ENCODE measurements at regions of chr14 and their contacts with region 1.

Region 1: DNA sequence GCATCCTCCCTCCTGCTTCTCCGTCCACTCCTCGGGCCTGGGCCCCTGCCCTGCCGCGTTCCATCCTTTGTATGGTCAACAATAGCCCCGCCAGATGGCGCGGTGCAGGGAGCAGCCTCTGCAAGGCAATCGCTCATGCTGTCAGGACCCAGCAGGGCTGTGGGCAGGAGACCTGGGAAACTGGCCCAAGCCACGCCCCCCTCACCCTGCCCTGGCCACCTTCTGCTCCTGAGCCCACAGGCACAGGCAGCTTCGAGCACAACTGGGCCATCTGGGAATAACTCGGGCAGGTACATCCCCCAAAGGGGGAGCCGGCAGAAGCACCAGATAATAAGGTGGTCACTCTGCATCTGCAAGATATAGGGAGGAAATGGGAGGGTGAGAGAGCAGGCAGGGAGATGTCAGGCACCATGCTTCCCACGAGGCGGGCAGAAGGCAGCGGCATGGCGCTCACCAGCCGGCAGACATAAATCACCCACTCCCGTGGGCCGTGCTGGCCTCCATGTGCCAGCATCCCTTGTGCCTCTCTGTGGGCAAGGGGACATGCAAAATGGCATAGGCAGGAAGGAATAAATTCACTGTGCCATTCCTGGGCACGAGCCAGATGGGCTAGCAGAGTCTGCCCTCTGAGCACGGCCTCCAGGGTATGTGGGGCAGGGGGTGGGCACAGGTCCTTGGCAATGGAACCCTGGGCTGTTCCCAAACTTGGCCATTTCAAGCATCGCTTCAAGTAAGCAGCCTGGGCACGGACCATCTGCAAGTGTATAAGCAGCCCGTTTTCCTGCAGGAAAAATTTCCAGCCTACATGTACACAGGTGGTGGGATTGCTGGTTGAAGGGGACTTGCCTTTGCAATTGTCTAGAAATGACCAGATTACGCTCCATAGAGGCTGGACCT is 40.5 kb downstream of the CCDC85C start:
- DNase-seq: peak; percentile 69 to 81
- ATAC-seq: peak; percentile 88 to 93 (median 90)
- H3K4me3 ChIP-seq: no peak overlapping the region
- H3K27ac ChIP-seq: no peak overlapping the region
- H3K4me1 ChIP-seq: peaks cover 25% of the 10 kb centered on the region
- H3K27me3 ChIP-seq: no peaks in the 10 kb centered on the region
- CTCF ChIP-seq: peak; percentile 47

Region 2: DNA sequence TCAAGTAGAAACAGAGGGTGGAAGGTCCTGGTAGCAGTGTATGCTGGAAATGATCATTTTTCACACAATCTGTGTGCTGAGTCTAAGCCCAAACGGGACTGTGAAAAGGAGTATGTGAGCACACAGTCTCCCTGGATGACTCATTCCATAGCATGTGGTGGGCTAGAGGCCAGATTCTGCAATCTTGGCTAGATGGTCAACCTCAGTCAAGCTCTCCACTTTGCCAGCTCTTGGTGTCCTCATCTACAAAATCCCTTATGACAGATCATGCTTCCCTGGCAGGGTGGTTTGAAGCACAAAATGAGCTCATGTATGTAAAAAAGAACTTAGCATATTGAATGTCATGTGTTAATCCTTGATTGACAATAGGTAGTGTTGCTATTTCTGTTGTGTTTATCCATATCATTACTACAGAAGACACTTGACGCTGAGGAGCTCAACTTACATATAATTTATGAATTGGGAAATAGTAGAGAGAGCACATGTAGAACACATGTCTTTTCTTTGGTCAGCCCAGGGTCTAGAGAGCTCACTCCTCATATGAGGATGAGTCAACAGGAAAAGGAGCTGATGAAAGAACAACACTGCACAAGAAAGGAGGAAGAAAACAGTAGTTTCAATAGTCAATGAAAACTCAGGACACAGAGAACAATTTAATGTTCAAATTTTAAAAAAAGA is 809.0 kb before region 1 on chr14:
- intact Hi-C with region 1: no loop called
- DNase-seq: no peak
- ATAC-seq: peak; percentile 48 to 79 (median 75)
- H3K4me3 ChIP-seq: no peak overlapping the region
- H3K27ac ChIP-seq: no peak overlapping the region
- H3K4me1 ChIP-seq: no peaks in the 10 kb centered on the region
- H3K27me3 ChIP-seq: no peaks in the 10 kb centered on the region
- CTCF ChIP-seq: no peak

Region 3: GRCh38 chr14:99628832-99629618 is 65.5 kb after region 1 on chr14:
- intact Hi-C with region 1: loop called (anchors 2 to 5 kb)
- DNase-seq: peak; percentile 74 to 87
- ATAC-seq: peak; percentile 93 to 98 (median 96)
- H3K4me3 ChIP-seq: no peak overlapping the region
- H3K27ac ChIP-seq: no peak overlapping the region
- H3K4me1 ChIP-seq: no peaks in the 10 kb centered on the region
- H3K27me3 ChIP-seq: peaks cover 0 to 3% (median 3%) of the 10 kb centered on the region in 3 donors
- CTCF ChIP-seq: peak; percentile 98